Activated CD4-positive, alpha-beta memory T cell treated with anti-CD3 and anti-CD28 coated beads, Interleukin-2, amount 10 ng/mL, durations not matched to agents 7 days and 5 days (primary cell): ENCODE measurements at regions of chr17 and their contacts with region 1.

Region 1: GRCh38 chr17:77476931-77477877 is 336.4 kb downstream of the SEC14L1 start:
- DNase-seq: no peak
- H3K4me3 Mint-ChIP-seq: no peak overlapping the region
- H3K27ac Mint-ChIP-seq: peak overlapping the region; percentile 40
- H3K4me1 Mint-ChIP-seq: peaks cover 69% of the 10 kb centered on the region
- H3K27me3 Mint-ChIP-seq: no peaks in the 10 kb centered on the region

Region 2: DNA sequence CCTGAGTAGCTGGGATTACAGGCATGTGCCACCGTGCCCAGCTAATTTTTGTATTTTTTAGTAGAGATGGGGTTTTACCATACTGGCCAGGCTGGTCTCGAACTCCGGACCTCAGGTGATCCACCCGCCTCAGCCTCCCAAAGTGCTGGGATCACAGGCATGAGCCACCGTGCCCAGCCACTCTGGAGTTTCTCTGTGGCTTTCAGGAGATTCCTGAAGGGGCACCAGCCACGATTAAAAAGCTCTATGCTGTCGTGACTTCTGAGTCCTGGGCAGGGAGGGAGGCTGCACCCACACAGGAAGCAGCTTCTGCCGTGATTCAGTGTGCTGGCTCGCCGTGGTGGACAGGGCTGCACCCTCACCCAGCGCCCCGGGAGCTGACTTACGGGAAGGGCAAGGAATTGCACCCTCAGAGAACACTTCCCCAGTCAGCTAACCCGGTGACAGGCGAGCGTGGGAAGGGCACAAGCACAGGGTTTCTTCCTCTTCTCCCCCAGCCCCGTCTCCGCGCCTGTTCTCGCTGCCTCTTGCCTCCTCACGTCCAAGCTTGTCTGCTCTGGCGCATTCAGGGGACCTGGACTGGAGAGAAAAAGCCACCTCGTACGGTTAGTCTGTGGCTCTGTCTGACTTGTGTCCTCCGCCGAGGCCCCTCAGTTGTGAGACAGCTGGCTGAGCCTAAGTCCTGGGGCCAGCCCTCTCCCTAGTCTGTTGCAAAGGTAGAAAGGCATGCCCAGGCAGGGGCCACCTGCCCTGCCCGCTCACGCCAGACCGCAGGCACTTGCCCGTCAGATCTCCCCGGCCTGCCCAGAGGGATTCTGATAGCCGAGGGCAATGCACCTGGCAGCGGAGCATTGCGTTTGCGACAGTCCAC is 191.4 kb before region 1 on chr17:
- CTCF ChIA-PET with region 1: no interaction called
- POLR2A ChIA-PET with region 1: no interaction called
- DNase-seq: no peak
- H3K4me3 Mint-ChIP-seq: no peak overlapping the region
- H3K27ac Mint-ChIP-seq: no peak overlapping the region
- H3K4me1 Mint-ChIP-seq: peaks cover 14% of the 10 kb centered on the region
- H3K27me3 Mint-ChIP-seq: peaks cover 22% of the 10 kb centered on the region

Region 3: DNA sequence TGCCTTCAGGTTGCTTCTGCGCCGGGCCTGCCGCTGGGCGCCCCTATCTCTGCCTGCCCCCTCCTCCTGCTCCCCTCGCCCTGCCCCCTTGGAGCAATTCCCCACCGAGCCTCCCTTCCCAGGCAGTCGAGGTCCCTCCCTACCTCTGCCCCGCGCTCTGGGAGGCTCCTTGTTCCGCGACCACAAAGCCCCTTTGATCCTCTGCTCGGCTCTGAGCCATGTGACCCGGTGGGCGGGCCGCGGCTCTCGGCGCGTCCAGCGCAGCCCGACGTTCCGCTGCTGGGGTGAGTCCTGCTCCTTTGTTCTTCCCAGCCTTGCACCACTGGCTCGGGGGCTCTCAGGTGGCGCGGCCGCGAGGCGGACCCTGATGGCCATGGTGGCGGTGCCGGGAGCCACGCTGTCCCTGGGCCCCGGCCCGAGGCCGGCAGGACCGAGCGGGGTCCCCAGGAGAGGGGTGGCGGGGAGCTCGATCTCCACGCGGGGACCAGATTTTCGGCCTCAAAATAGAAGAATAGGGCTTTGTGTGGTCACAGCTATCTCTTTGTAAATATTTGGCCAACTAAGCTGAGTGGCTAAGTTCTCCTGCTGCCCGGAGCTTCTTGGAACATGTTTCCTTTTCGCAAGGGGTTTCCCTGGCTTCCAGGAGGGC is 25.8 kb before region 1 on chr17:
- CTCF ChIA-PET with region 1: interaction called, 5 read pairs
- POLR2A ChIA-PET with region 1: interaction called, 71 read pairs
- DNase-seq: peak; percentile 71
- H3K4me3 Mint-ChIP-seq: peak overlapping the region; percentile 90
- H3K27ac Mint-ChIP-seq: peak overlapping the region; percentile 99
- H3K4me1 Mint-ChIP-seq: peaks cover 74% of the 10 kb centered on the region
- H3K27me3 Mint-ChIP-seq: no peaks in the 10 kb centered on the region